ENCODE measurements at regions of chr11 and their contacts with region 1.

Region 1: GRCh38 chr11:111359223-111360149 is 19.6 kb downstream of the POU2AF1 start:
- DNase-seq: no peak
- ATAC-seq: no peak
- H3K4me3 ChIP-seq: no peak overlapping the region
- H3K4me3 Mint-ChIP-seq: no peak overlapping the region
- H3K27ac ChIP-seq: no peak overlapping the region
- H3K27ac Mint-ChIP-seq: no peak overlapping the region
- H3K4me1 ChIP-seq: no peaks in the 10 kb centered on the region
- H3K4me1 Mint-ChIP-seq: no peaks in the 10 kb centered on the region
- H3K27me3 ChIP-seq: no peaks in the 10 kb centered on the region
- H3K27me3 Mint-ChIP-seq: no peaks in the 10 kb centered on the region
- CTCF ChIP-seq: no peak

Region 2: GRCh38 chr11:111422494-111423249 is 63.2 kb after region 1 on chr11:
- CTCF ChIA-PET with region 1: interaction called, 5 read pairs
- POLR2A ChIA-PET with region 1: no interaction called
- intact Hi-C with region 1: loop called (anchors 2 kb)
- DNase-seq: peak in 8 of 9 experiments; percentile 26 to 64 (median 40)
- ATAC-seq: peak; percentile 54
- H3K4me3 ChIP-seq: no peak overlapping the region
- H3K4me3 Mint-ChIP-seq: no peak overlapping the region
- H3K27ac ChIP-seq: no peak overlapping the region
- H3K27ac Mint-ChIP-seq: no peak overlapping the region
- H3K4me1 ChIP-seq: peaks cover 5% of the 10 kb centered on the region
- H3K4me1 Mint-ChIP-seq: peaks cover 13% of the 10 kb centered on the region
- H3K27me3 ChIP-seq: no peaks in the 10 kb centered on the region
- H3K27me3 Mint-ChIP-seq: peaks cover 2% of the 10 kb centered on the region
- CTCF ChIP-seq: peak; percentile 35